ENCODE measurements at regions of chr10 and their contacts with region 1.

Region 1: GRCh38 chr10:6445501-6446316 is 134.4 kb downstream of the PRKCQ start:
- DNase-seq: peak; percentile 80
- ATAC-seq: peak; percentile 68
- H3K4me3 Mint-ChIP-seq: no peak overlapping the region
- H3K27ac Mint-ChIP-seq: peak overlapping the region; percentile 16
- H3K4me1 Mint-ChIP-seq: peaks cover 37% of the 10 kb centered on the region
- H3K27me3 Mint-ChIP-seq: no peaks in the 10 kb centered on the region
- CTCF ChIP-seq: peak; percentile 81

Region 2: DNA sequence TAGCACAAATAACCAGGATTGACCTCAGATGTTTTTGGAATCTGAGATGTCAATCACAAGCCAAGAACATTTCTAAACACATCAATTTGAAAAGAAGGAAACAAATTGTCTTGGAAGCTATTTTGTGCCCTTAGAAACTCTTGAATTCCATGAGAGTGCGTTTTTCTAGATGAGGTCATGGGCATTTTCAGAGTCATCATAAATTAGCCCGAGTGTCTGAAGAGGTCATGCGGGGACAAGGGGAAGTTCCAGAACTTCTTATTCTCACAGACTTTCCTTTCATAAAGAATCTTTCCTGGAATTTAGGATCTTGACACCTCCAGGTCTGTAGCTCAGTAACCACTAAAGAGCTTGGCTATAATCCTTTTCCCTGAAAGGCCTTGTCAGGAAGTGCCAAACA is 411.8 kb before region 1 on chr10:
- CTCF ChIA-PET with region 1: no interaction called
- POLR2A ChIA-PET with region 1: no interaction called
- intact Hi-C with region 1: no loop called
- DNase-seq: peak; percentile 3
- ATAC-seq: no peak
- H3K4me3 Mint-ChIP-seq: no peak overlapping the region
- H3K27ac Mint-ChIP-seq: peak overlapping the region; percentile 75
- H3K4me1 Mint-ChIP-seq: peaks cover 70% of the 10 kb centered on the region
- H3K27me3 Mint-ChIP-seq: no peaks in the 10 kb centered on the region
- CTCF ChIP-seq: no peak

Region 3: GRCh38 chr10:6458814-6459213 is 13.1 kb after region 1 on chr10:
- CTCF ChIA-PET with region 1: interaction called, 13 read pairs
- POLR2A ChIA-PET with region 1: interaction called, 4 read pairs
- intact Hi-C with region 1: no loop called
- DNase-seq: peak; percentile 44
- ATAC-seq: peak; percentile 24
- H3K4me3 Mint-ChIP-seq: no peak overlapping the region
- H3K27ac Mint-ChIP-seq: peak overlapping the region; percentile 59
- H3K4me1 Mint-ChIP-seq: peaks cover 25% of the 10 kb centered on the region
- H3K27me3 Mint-ChIP-seq: no peaks in the 10 kb centered on the region
- CTCF ChIP-seq: no peak

Region 4: DNA sequence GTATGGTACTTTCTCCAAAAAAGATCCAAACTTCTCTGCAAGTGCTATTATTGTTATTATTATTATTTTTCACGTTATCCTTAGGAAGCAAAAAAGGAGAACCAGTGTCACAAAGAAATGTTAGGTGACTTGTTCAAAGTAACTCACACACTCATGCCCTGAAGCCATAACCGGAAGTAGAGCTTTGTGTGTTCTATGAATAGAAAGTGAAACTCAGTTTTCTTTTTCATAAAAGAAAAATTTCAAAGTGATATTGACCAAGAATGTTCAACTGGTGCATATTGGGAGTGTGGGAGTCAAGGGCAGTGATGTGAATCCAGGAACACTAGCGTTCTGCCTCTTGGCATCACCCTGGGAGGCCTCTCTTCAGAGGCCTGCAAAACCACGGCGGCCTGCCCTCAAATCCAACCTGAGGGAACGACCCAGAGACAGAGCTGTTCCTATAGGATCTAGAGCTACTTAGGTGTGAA is 28.2 kb after region 1 on chr10:
- CTCF ChIA-PET with region 1: interaction called, 20 read pairs
- POLR2A ChIA-PET with region 1: no interaction called
- intact Hi-C with region 1: no loop called
- DNase-seq: peak; percentile 49
- ATAC-seq: peak; percentile 82
- H3K4me3 Mint-ChIP-seq: peak overlapping the region; percentile 80
- H3K27ac Mint-ChIP-seq: peak overlapping the region; percentile 96
- H3K4me1 Mint-ChIP-seq: peaks cover 67% of the 10 kb centered on the region
- H3K27me3 Mint-ChIP-seq: no peaks in the 10 kb centered on the region
- CTCF ChIP-seq: no peak

Region 5: DNA sequence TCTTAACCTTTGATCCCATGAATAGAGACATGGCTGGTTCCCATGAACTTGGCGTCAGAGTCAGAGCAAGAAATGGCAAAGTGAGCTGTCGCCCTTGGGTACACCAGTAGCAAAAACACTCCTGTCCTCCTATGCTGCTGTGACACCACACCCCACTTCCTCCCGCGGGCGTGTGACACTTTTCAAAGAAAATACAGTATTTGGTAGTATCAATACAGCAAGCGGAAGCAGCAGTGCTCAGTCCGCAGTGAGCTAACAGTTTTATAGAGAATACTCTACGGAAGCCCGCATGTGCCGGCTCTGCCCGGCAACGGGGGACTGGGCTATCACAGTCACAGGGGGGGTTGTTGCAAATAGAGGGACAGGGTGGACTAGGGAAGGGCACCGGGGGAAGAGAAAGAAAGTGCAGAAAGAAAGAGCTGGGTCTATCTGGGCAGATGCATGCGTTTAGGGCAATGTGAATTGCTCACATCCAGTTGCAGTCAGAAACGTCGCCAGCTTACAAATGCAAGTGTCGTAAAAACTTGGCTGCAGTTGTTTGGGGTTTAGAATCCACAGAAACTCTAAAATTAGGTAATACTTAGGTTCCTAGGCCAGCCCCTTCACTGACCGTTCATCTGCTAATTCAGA is 84.6 kb after region 1 on chr10:
- CTCF ChIA-PET with region 1: interaction called, 11 read pairs
- POLR2A ChIA-PET with region 1: no interaction called
- intact Hi-C with region 1: no loop called
- DNase-seq: peak; percentile 94
- ATAC-seq: peak; percentile 93
- H3K4me3 Mint-ChIP-seq: peak overlapping the region; percentile 75
- H3K27ac Mint-ChIP-seq: peak overlapping the region; percentile 95
- H3K4me1 Mint-ChIP-seq: peaks cover 77% of the 10 kb centered on the region
- H3K27me3 Mint-ChIP-seq: no peaks in the 10 kb centered on the region
- CTCF ChIP-seq: no peak

Region 6: DNA sequence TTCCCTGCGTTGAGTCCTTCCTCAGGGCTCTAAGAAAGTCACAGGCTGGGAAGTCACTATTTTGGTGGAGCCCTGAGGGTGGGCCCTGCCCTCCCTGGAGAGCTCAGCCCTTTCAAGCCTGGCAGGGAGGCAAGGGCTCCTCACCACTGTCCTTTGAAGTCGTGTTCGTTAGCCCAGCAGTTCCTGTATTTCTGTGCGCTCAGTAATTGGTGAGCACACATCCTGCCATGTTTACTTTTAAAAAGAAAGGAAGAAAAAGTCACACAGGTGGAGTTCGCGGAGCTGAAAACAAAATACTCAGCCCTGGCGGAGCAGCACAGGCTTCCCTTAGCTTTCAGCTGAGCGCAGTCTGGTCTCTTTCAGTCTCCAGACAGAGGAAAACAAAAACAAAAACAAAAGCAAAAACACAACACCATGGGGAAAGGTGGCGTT is 97.3 kb after region 1 on chr10:
- CTCF ChIA-PET with region 1: interaction called, 10 read pairs
- POLR2A ChIA-PET with region 1: interaction called, 4 read pairs
- intact Hi-C with region 1: no loop called
- DNase-seq: peak; percentile 58
- ATAC-seq: peak; percentile 67
- H3K4me3 Mint-ChIP-seq: peak overlapping the region; percentile 82
- H3K27ac Mint-ChIP-seq: peak overlapping the region; percentile 100
- H3K4me1 Mint-ChIP-seq: peaks cover 70% of the 10 kb centered on the region
- H3K27me3 Mint-ChIP-seq: no peaks in the 10 kb centered on the region
- CTCF ChIP-seq: no peak

Region 7: GRCh38 chr10:6563075-6563474 is 117.4 kb after region 1 on chr10:
- CTCF ChIA-PET with region 1: interaction called, 10 read pairs
- POLR2A ChIA-PET with region 1: no interaction called
- intact Hi-C with region 1: no loop called
- DNase-seq: peak; percentile 90
- ATAC-seq: peak; percentile 89
- H3K4me3 Mint-ChIP-seq: peak overlapping the region; percentile 71
- H3K27ac Mint-ChIP-seq: peak overlapping the region; percentile 88
- H3K4me1 Mint-ChIP-seq: peaks cover 88% of the 10 kb centered on the region
- H3K27me3 Mint-ChIP-seq: no peaks in the 10 kb centered on the region
- CTCF ChIP-seq: no peak

Region 8: GRCh38 chr10:6654571-6654970 is 208.9 kb after region 1 on chr10:
- CTCF ChIA-PET with region 1: no interaction called
- POLR2A ChIA-PET with region 1: no interaction called
- intact Hi-C with region 1: no loop called
- DNase-seq: no peak
- ATAC-seq: no peak
- H3K4me3 Mint-ChIP-seq: no peak overlapping the region
- H3K27ac Mint-ChIP-seq: no peak overlapping the region
- H3K4me1 Mint-ChIP-seq: peaks cover 10% of the 10 kb centered on the region
- H3K27me3 Mint-ChIP-seq: no peaks in the 10 kb centered on the region
- CTCF ChIP-seq: no peak

Measured in activated CD8-positive, alpha-beta T cell treated with anti-CD3 and anti-CD28 coated beads for 36 hours (primary cell).